CD4-positive, alpha-beta T cell (primary cell): ENCODE measurements at regions of chrX and their contacts with region 1.

Region 1: DNA sequence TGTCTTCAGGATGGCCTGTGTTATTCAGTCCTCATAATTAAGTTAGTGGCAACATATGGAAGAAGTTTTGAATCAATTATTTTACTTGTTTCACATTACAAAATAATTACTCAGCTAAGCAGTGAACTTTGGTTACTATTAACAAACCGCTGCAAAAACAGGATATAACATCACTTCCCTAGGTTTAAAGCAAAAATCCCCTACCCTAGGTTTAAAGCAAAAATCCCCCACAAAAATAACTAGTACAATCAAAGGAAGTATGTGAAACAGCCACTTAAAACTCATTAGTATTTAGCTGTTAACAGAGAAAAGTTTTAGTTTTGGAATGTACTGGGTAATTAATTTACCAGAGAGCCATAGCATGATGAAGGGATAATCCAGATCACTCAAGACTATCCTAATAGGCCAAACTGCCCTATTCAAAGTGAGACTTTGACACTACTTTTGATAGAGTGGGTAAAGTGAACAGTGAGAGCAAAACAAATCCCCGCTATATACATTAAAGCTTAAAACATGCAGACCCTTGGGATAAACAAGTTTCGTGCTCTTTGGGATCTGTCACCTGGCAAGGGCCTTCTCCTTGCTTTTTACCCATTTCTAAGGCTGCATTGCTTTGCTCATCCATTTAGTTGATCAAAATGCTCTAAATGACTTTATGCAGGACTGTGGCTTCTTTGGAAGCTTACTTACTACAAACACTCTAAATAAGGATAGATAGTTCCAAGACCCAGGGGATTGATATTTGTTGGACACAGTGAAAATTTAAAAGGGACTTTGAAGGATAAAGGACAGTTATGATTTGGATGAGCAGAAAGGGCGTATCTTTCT is 36.4 kb upstream of the GPR174 start:
- DNase-seq: peak in 3 of 14 experiments; percentile 75 to 83 (median 82)
- ATAC-seq: peak; percentile 91
- H3K4me3 ChIP-seq: peak overlapping the region; percentile 9
- H3K4me3 Mint-ChIP-seq: peak overlapping the region; percentile 67
- H3K27ac ChIP-seq: peak overlapping the region; percentile 90 to 97
- H3K27ac Mint-ChIP-seq: peak overlapping the region; percentile 97
- H3K4me1 ChIP-seq: peaks cover 26% of the 10 kb centered on the region
- H3K4me1 Mint-ChIP-seq: peaks cover 61% of the 10 kb centered on the region
- H3K27me3 ChIP-seq: no peaks in the 10 kb centered on the region
- H3K27me3 Mint-ChIP-seq: no peaks in the 10 kb centered on the region
- CTCF ChIP-seq: no peak

Region 2: GRCh38 chrX:79081895-79082512 is 26.1 kb before region 1 on chrX:
- CTCF ChIA-PET with region 1: interaction called, 8 read pairs
- POLR2A ChIA-PET with region 1: interaction called, 33 read pairs
- intact Hi-C with region 1: no loop called
- DNase-seq: peak in 7 of 14 experiments; percentile 8 to 79 (median 51)
- ATAC-seq: peak; percentile 88
- H3K4me3 ChIP-seq: no peak overlapping the region
- H3K4me3 Mint-ChIP-seq: peak overlapping the region; percentile 82
- H3K27ac ChIP-seq: no peak overlapping the region
- H3K27ac Mint-ChIP-seq: peak overlapping the region; percentile 82
- H3K4me1 ChIP-seq: peaks cover 2% of the 10 kb centered on the region
- H3K4me1 Mint-ChIP-seq: peaks cover 33% of the 10 kb centered on the region
- H3K27me3 ChIP-seq: no peaks in the 10 kb centered on the region
- H3K27me3 Mint-ChIP-seq: no peaks in the 10 kb centered on the region
- CTCF ChIP-seq: peak; percentile 43

Region 3: DNA sequence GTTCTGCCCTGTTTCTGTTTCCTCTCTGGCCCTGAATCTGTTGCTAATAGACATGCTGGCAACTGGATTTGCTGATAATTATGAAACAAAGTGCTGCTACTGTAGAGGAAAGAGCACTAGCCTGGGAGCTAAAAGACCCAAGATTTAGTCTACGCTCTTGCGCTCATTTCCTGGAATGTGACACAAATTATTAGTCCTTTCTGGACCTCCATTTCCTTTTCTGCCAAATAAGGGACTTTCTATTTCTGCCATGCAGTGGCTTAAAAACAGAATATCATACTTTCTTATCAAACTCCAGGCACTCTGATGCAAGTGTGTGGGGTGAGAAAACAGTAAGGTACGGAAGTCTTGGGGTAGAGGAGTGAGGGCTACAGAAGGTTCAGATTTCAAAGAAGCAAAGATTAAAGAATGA is 12.0 kb before region 1 on chrX:
- CTCF ChIA-PET with region 1: interaction called, 6 read pairs
- POLR2A ChIA-PET with region 1: interaction called, 22 read pairs
- intact Hi-C with region 1: no loop called
- DNase-seq: peak in 3 of 14 experiments; percentile 44 to 68 (median 51)
- ATAC-seq: peak; percentile 57
- H3K4me3 ChIP-seq: peak overlapping the region; percentile 19
- H3K4me3 Mint-ChIP-seq: peak overlapping the region; percentile 69
- H3K27ac ChIP-seq: peak overlapping the region; percentile 62 to 80
- H3K27ac Mint-ChIP-seq: peak overlapping the region; percentile 96
- H3K4me1 ChIP-seq: peaks cover 21% of the 10 kb centered on the region
- H3K4me1 Mint-ChIP-seq: peaks cover 77% of the 10 kb centered on the region
- H3K27me3 ChIP-seq: no peaks in the 10 kb centered on the region
- H3K27me3 Mint-ChIP-seq: no peaks in the 10 kb centered on the region
- CTCF ChIP-seq: no peak

Region 4: GRCh38 chrX:79146640-79147390 is 38.7 kb after region 1 on chrX:
- CTCF ChIA-PET with region 1: interaction called, 4 read pairs
- POLR2A ChIA-PET with region 1: interaction called, 79 read pairs
- intact Hi-C with region 1: loop called (anchors 5 kb)
- DNase-seq: peak in 4 of 14 experiments; percentile 32 to 80 (median 44)
- ATAC-seq: peak; percentile 22
- H3K4me3 ChIP-seq: peak overlapping the region; percentile 80
- H3K4me3 Mint-ChIP-seq: peak overlapping the region; percentile 95
- H3K27ac ChIP-seq: peak overlapping the region; percentile 73 to 77
- H3K27ac Mint-ChIP-seq: peak overlapping the region; percentile 95
- H3K4me1 ChIP-seq: peaks cover 20% of the 10 kb centered on the region
- H3K4me1 Mint-ChIP-seq: peaks cover 51% of the 10 kb centered on the region
- H3K27me3 ChIP-seq: no peaks in the 10 kb centered on the region
- H3K27me3 Mint-ChIP-seq: no peaks in the 10 kb centered on the region
- CTCF ChIP-seq: no peak

Region 5: GRCh38 chrX:79161655-79162054 is 53.5 kb after region 1 on chrX:
- CTCF ChIA-PET with region 1: no interaction called
- POLR2A ChIA-PET with region 1: interaction called, 55 read pairs
- intact Hi-C with region 1: no loop called
- DNase-seq: peak in 8 of 14 experiments; percentile 14 to 92 (median 52)
- ATAC-seq: peak; percentile 88
- H3K4me3 ChIP-seq: peak overlapping the region; percentile 50
- H3K4me3 Mint-ChIP-seq: peak overlapping the region; percentile 94
- H3K27ac ChIP-seq: peak overlapping the region; percentile 74 to 80
- H3K27ac Mint-ChIP-seq: peak overlapping the region; percentile 97
- H3K4me1 ChIP-seq: peaks cover 25% of the 10 kb centered on the region
- H3K4me1 Mint-ChIP-seq: peaks cover 88% of the 10 kb centered on the region
- H3K27me3 ChIP-seq: no peaks in the 10 kb centered on the region
- H3K27me3 Mint-ChIP-seq: no peaks in the 10 kb centered on the region
- CTCF ChIP-seq: no peak

Region 6: DNA sequence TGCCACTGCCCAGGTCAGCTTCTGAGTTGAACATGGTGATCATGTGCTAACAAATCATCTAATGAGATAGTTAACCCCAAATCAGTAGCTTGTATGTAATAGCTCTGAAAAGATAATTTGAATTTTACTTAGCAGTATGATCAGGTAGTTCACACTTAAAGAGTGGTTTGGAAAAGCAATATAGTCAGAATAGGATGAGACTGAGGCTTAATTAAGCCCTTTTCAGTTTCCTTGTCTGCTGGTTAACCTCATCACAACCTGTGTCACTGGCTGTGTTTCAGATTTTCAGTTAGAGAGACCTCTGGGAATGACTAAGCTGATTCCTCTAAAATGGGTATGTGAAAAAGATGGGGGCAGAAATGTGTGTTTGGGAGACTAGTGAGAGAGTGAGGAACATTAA is 74.5 kb after region 1 on chrX:
- CTCF ChIA-PET with region 1: no interaction called
- POLR2A ChIA-PET with region 1: interaction called, 11 read pairs
- intact Hi-C with region 1: no loop called
- DNase-seq: peak in 1 of 14 experiments; percentile 40
- ATAC-seq: no peak
- H3K4me3 ChIP-seq: no peak overlapping the region
- H3K4me3 Mint-ChIP-seq: peak overlapping the region; percentile 22
- H3K27ac ChIP-seq: peak overlapping the region; percentile 29 to 58
- H3K27ac Mint-ChIP-seq: peak overlapping the region; percentile 78
- H3K4me1 ChIP-seq: peaks cover 17% of the 10 kb centered on the region
- H3K4me1 Mint-ChIP-seq: peaks cover 76% of the 10 kb centered on the region
- H3K27me3 ChIP-seq: no peaks in the 10 kb centered on the region
- H3K27me3 Mint-ChIP-seq: no peaks in the 10 kb centered on the region
- CTCF ChIP-seq: no peak